ENCODE measurements at regions of chr7 and their contacts with region 1.

Region 1: GRCh38 chr7:155724327-155725005 is 80.0 kb downstream of the RBM33 start:
- DNase-seq: no peak
- H3K4me3 ChIP-seq: no peak overlapping the region
- H3K27ac ChIP-seq: no peak overlapping the region
- H3K4me1 ChIP-seq: peaks cover 7 to 48% (median 21%) of the 10 kb centered on the region in 4 donors
- H3K27me3 ChIP-seq: no peaks in the 10 kb centered on the region
- CTCF ChIP-seq: no peak
- EP300 ChIP-seq: no peak
- POLR2A ChIP-seq: no peak

Region 2: GRCh38 chr7:155644178-155644970 is 80.1 kb before region 1 on chr7 and contains the start of gene RBM33:
- intact Hi-C with region 1: loop called (anchors 10 kb)
- DNase-seq: peak; percentile 76 to 95
- H3K4me3 ChIP-seq: peak within 1 kb of the TSS; percentile 78 to 98 (median 96)
- H3K27ac ChIP-seq: peak within 1 kb of the TSS; percentile 88 to 97 (median 94)
- H3K4me1 ChIP-seq: peaks cover 5 to 38% (median 34%) of the 10 kb centered on the region in 4 donors
- H3K27me3 ChIP-seq: no peaks in the 10 kb centered on the region
- CTCF ChIP-seq: peak in 1 of 7 experiments; percentile 1
- EP300 ChIP-seq: no peak
- POLR2A ChIP-seq: no peak
- total RNA-seq, gene RBM33: 60.2 to 182 (median 62.9) TPM